HepG2 (cell line): ENCODE measurements at regions of chr1 and their contacts with region 1.

Region 1: DNA sequence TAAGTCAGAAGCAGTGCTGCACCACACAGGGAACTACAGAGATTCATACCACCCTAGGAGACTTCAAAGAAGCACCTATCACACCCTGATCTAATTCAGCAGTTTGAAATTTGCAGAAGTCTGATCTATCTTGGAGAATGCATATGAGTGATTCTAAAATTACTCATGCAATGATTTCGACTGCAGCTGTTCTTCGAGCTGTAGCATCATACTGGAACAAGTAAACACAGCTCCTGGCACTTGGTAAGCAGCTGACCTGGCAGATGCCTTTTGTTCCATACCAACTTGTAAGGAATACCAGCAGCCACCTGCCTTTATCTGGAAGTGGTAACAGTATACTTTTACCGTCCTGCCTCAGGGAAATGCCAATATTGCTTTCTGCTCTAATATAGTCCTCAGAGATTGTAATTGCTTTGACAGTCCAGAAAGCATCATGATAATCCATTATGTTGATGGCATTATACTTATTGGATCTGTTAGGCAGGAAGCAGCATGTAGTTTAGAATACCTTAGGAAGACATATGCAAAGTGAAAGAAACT is 25.7 kb downstream of the AADACL4 start:
- DNase-seq: no peak
- ATAC-seq: no peak
- H3K4me3 ChIP-seq: no peak overlapping the region
- H3K27ac ChIP-seq: no peak overlapping the region
- H3K4me1 ChIP-seq: no peaks in the 10 kb centered on the region
- H3K27me3 ChIP-seq: peaks cover 2 to 4% of the 10 kb centered on the region in 2 experiments; a peak in 2 of 5 replicates
- CTCF ChIP-seq: no peak
- EP300 ChIP-seq: no peak
- POLR2A ChIP-seq: no peak
- RAD21 ChIP-seq: no peak

Region 2: DNA sequence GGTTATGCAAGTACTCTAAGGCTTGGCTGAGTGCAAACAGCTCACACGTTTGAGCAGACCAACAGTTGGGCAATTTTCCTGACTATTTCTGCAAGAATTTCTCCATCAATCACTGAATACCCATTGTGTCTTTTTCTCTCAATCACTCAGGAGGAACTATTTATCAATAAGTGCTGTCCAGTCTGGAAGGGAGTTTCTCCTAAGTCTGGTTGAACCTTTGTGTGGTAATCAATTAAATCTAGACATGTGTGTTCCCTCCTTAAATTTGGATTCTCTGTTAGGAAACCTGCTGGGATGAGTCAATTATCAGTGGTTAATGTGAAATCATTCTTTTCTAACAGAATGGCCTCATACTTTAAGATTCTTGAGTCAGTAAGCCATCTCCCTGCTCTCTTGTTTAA is 39.5 kb after region 1 on chr1:
- CTCF ChIA-PET with region 1: no interaction called
- POLR2A ChIA-PET with region 1: no interaction called
- in situ Hi-C with region 1: no loop called
- intact Hi-C with region 1: no loop called
- DNase-seq: no peak
- ATAC-seq: no peak
- H3K4me3 ChIP-seq: no peak overlapping the region
- H3K27ac ChIP-seq: no peak overlapping the region
- H3K4me1 ChIP-seq: no peaks in the 10 kb centered on the region
- H3K27me3 ChIP-seq: peaks cover 1 to 8% of the 10 kb centered on the region in 2 experiments; a peak in 1 of 5 replicates
- CTCF ChIP-seq: no peak
- EP300 ChIP-seq: no peak
- POLR2A ChIP-seq: no peak
- RAD21 ChIP-seq: no peak

Region 3: DNA sequence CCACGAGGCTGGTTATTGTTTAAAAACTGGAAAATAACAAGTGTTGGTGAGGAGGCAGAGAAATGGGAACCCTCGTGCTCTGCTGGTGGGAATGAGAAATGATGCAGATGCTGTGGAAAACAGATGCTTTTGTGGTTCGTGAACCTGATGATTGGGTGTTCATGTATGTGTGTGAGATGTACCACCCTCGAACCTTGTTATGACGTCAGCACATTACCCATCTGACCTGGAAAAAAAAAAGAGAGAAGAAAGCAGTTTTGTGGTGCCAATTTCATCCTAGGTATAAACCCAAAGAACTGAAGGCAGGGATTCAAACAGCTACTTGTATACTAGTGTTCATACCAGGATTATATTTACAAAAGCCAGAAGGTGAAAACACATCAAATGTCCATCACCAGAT is 70.0 kb after region 1 on chr1:
- CTCF ChIA-PET with region 1: no interaction called
- POLR2A ChIA-PET with region 1: no interaction called
- in situ Hi-C with region 1: no loop called
- intact Hi-C with region 1: loop called (anchors 2 kb)
- DNase-seq: no peak
- ATAC-seq: no peak
- H3K4me3 ChIP-seq: no peak overlapping the region
- H3K27ac ChIP-seq: no peak overlapping the region
- H3K4me1 ChIP-seq: no peaks in the 10 kb centered on the region
- H3K27me3 ChIP-seq: no peaks in the 10 kb centered on the region
- CTCF ChIP-seq: no peak
- EP300 ChIP-seq: no peak
- POLR2A ChIP-seq: no peak
- RAD21 ChIP-seq: no peak

Region 4: DNA sequence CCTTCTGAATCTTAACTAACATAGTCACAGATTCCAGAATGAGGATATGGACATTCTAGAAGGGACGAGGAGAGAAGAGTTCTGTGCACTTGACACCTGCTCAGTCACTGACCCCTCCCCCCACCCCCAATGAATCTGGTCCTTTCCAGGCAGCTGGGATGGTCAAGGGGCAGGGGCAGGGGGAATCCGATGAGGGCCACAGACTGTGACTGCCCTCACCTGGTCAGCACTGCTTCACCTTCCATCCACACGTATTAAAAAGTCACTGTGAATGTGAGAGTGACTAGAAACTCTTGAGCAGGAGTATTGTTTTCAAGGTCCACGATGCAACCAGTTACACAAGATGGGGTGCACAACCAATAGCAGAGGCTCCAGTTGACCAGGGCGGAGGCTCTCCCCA is 94.4 kb after region 1 on chr1:
- CTCF ChIA-PET with region 1: no interaction called
- POLR2A ChIA-PET with region 1: no interaction called
- in situ Hi-C with region 1: no loop called
- intact Hi-C with region 1: no loop called
- DNase-seq: no peak
- ATAC-seq: no peak
- H3K4me3 ChIP-seq: no peak overlapping the region
- H3K27ac ChIP-seq: no peak overlapping the region
- H3K4me1 ChIP-seq: no peaks in the 10 kb centered on the region
- H3K27me3 ChIP-seq: peaks cover 1 to 16% of the 10 kb centered on the region in 2 experiments; a peak in 2 of 5 replicates
- CTCF ChIP-seq: no peak
- EP300 ChIP-seq: no peak
- POLR2A ChIP-seq: no peak
- RAD21 ChIP-seq: no peak